ENCODE measurements at regions of chr1 and their contacts with region 1.

Region 1: GRCh38 chr1:156217871-156218270 is 5.1 kb downstream of the PMF1 start:
- DNase-seq: no peak
- ATAC-seq: no peak
- H3K4me3 ChIP-seq: no peak overlapping the region
- H3K27ac ChIP-seq: no peak overlapping the region
- H3K4me1 ChIP-seq: peaks cover 2% of the 10 kb centered on the region
- H3K27me3 ChIP-seq: no peaks in the 10 kb centered on the region

Region 2: DNA sequence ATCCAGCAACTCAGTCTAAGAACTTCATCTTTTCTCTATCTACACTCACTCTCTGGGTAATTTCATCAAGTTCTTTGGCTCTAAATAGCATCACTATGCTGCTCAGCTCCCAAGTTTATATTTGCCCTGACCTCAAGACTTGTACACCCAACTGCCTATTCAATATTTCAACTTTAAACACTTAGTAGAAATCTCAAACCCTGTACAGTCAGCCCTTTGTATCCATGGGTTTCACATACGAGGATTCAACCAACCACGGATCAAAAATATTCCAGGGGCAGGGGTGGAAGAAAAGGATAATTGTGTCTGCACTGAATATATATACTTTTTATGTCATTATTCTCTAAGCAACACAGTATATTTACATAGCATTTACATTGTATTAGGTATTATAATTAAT is 669.2 kb before region 1 on chr1:
- intact Hi-C with region 1: no loop called
- DNase-seq: no peak
- ATAC-seq: no peak
- H3K4me3 ChIP-seq: no peak overlapping the region
- H3K27ac ChIP-seq: no peak overlapping the region
- H3K4me1 ChIP-seq: no peaks in the 10 kb centered on the region
- H3K27me3 ChIP-seq: no peaks in the 10 kb centered on the region

Region 3: GRCh38 chr1:156153363-156153762 is 64.5 kb before region 1 on chr1 and contains the start of gene SEMA4A:
- intact Hi-C with region 1: loop called in 1 of 4 experiments (anchors 2 kb)
- DNase-seq: no peak
- ATAC-seq: no peak
- H3K4me3 ChIP-seq: no peak within 1 kb of the TSS
- H3K27ac ChIP-seq: no peak within 1 kb of the TSS
- H3K4me1 ChIP-seq: no peaks in the 10 kb centered on the region
- H3K27me3 ChIP-seq: no peaks in the 10 kb centered on the region
- total RNA-seq, gene SEMA4A: 2.3 to 3.4 (median 2.7) TPM

Measured in right cardiac atrium (tissue), 5 donors.